ENCODE measurements at regions of chr5 and their contacts with region 1.

Region 1: DNA sequence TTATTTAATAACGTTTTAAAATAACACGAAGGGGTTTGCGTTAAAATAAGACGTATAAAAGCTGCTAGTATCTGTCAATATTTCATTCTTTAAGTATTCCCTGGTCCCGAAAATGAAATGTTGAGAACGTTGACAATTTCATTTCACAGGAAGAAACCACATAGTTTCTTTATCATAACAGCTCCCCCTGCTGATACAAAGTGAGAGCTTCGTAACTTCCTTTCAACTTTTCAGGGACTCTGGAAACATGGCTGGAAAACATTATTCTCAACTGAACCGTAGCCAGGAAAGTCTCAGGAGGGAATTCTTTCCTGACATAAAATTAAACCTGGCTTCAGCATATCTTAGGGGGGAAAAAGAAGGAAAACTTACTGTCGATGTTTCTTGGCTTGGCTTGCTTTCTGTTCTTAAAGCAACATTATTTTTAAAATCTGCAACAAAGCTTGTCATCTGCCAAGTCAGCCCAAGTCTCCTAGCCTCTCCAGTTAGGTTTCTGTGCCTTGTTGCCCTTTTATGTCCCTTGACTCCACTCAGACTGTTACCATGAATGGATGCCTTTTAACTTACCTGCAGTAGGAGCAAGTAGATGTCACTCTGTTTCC is 122.9 kb upstream of the DAB2 start:
- DNase-seq: no peak
- ATAC-seq: no peak
- H3K4me3 Mint-ChIP-seq: no peak overlapping the region
- H3K27ac Mint-ChIP-seq: no peak overlapping the region
- H3K4me1 Mint-ChIP-seq: peaks cover 1% of the 10 kb centered on the region
- H3K27me3 Mint-ChIP-seq: peaks cover 11% of the 10 kb centered on the region
- CTCF ChIP-seq: no peak

Region 2: DNA sequence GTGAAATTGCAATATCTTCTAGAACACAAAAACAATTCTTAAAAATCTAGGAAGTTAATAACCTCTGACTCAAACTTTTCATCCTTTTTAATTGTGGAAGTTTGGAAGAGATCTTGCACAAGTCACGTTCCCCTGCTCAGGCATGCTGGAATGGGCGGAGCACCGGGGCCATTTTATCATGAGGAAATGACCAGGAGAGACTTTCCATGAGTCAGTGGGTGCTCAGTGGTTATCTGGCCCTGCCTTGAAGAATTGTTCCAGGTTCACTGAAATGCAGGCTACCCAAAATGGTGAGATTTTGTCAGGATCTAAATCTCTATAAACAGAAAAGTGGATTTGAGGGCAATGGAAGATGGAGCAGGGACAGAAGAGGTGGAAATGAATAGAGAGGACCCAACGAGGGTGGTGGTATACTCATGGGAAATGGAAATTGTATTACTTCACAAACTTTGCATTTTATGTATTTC is 389.5 kb before region 1 on chr5:
- CTCF ChIA-PET with region 1: no interaction called
- POLR2A ChIA-PET with region 1: no interaction called
- intact Hi-C with region 1: loop called (anchors 10 kb)
- DNase-seq: no peak
- ATAC-seq: no peak
- H3K4me3 Mint-ChIP-seq: no peak overlapping the region
- H3K27ac Mint-ChIP-seq: no peak overlapping the region
- H3K4me1 Mint-ChIP-seq: peaks cover 2% of the 10 kb centered on the region
- H3K27me3 Mint-ChIP-seq: peaks cover 6% of the 10 kb centered on the region
- CTCF ChIP-seq: no peak

Region 3: DNA sequence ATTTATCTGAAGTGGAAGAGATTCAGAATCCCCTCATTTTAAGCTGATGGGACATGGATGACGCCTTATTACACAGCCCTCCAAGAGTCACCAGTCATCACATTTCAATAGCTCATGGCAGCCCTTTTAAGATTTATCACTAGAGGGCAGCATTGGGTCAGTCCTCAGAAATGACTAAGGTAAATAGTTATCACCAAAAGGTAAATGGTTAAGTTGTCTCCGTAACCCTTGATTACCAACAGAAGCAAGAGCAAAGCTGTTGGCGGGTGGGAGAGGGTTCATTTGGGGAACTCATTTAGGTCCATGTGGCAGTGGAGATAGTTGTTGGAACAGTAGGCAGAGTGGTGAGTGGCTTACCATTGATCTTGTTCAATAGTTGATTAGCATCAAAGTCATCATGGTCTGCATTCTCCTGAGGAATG is 171.3 kb before region 1 on chr5:
- CTCF ChIA-PET with region 1: interaction called, 153 read pairs
- POLR2A ChIA-PET with region 1: no interaction called
- intact Hi-C with region 1: loop called (anchors 1 kb)
- DNase-seq: no peak
- ATAC-seq: peak; percentile 45
- H3K4me3 Mint-ChIP-seq: no peak overlapping the region
- H3K27ac Mint-ChIP-seq: no peak overlapping the region
- H3K4me1 Mint-ChIP-seq: no peaks in the 10 kb centered on the region
- H3K27me3 Mint-ChIP-seq: no peaks in the 10 kb centered on the region
- CTCF ChIP-seq: no peak

Region 4: GRCh38 chr5:39424736-39425637 is 122.7 kb before region 1 on chr5 and contains the start of gene DAB2:
- CTCF ChIA-PET with region 1: interaction called, 12 read pairs
- POLR2A ChIA-PET with region 1: no interaction called
- intact Hi-C with region 1: no loop called
- DNase-seq: peak; percentile 18
- ATAC-seq: peak; percentile 56
- H3K4me3 Mint-ChIP-seq: peak within 1 kb of the TSS; percentile 78
- H3K27ac Mint-ChIP-seq: no peak within 1 kb of the TSS
- H3K4me1 Mint-ChIP-seq: peaks cover 10% of the 10 kb centered on the region
- H3K27me3 Mint-ChIP-seq: peaks cover 25% of the 10 kb centered on the region
- CTCF ChIP-seq: no peak
- total RNA-seq, gene DAB2: not detected in 2 replicates

Region 5: GRCh38 chr5:41371741-41372140 is 1824.1 kb after region 1 on chr5:
- CTCF ChIA-PET with region 1: no interaction called
- POLR2A ChIA-PET with region 1: no interaction called
- intact Hi-C with region 1: no loop called
- DNase-seq: no peak
- ATAC-seq: no peak
- H3K4me3 Mint-ChIP-seq: no peak overlapping the region
- H3K27ac Mint-ChIP-seq: no peak overlapping the region
- H3K4me1 Mint-ChIP-seq: no peaks in the 10 kb centered on the region
- H3K27me3 Mint-ChIP-seq: no peaks in the 10 kb centered on the region
- CTCF ChIP-seq: no peak